Activated CD8-positive, alpha-beta T cell treated with anti-CD3 and anti-CD28 coated beads for 36 hours (primary cell): ENCODE measurements at regions of chr6 and their contacts with region 1.

Region 1: GRCh38 chr6:149423964-149424440 is 23.9 kb downstream of the SUMO4 start:
- DNase-seq: no peak
- ATAC-seq: no peak
- H3K4me3 Mint-ChIP-seq: no peak overlapping the region
- H3K27ac Mint-ChIP-seq: no peak overlapping the region
- H3K4me1 Mint-ChIP-seq: peaks cover 8% of the 10 kb centered on the region
- H3K27me3 Mint-ChIP-seq: no peaks in the 10 kb centered on the region
- CTCF ChIP-seq: no peak

Region 2: DNA sequence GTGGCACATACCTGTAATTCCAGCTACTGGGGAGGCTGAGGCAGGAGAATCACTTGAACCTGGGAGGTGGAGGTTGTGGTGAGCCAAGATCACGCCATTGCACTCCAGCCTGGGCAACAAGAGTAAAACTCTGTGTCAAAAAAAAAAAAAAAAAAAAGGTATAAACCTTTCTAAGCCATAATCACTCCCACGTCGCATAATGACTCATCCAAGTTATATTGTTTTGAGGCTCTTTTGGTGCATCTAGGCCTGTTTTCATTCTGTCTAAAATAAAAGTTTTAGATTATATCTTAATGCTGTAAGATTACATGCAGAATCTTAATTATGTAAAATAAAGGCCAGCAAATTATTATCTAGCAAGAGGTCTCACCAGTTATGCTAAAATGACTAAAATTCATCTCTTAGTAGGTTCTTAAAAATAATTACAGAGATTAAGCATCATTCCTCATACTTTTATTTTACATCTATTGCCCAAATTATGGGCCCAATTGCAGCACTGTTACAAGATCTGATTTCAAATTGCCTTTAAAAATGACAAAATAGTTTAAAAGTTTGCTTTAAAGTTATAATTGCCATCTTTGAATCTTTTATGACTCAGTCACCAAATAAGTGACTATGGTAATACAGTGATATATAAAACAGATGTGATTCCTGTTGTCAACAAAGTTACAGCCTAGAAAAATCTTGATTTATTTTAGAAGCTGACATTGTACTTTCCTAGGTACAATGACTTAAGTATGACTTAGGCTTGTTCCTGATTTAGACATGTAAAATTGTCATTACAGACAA is 34.3 kb before region 1 on chr6:
- CTCF ChIA-PET with region 1: no interaction called
- POLR2A ChIA-PET with region 1: no interaction called
- intact Hi-C with region 1: no loop called
- DNase-seq: no peak
- ATAC-seq: no peak
- H3K4me3 Mint-ChIP-seq: no peak overlapping the region
- H3K27ac Mint-ChIP-seq: no peak overlapping the region
- H3K4me1 Mint-ChIP-seq: peaks cover 69% of the 10 kb centered on the region
- H3K27me3 Mint-ChIP-seq: no peaks in the 10 kb centered on the region
- CTCF ChIP-seq: no peak

Region 3: GRCh38 chr6:149410557-149410956 is 13.4 kb before region 1 on chr6:
- CTCF ChIA-PET with region 1: interaction called, 11 read pairs
- POLR2A ChIA-PET with region 1: interaction called, 4 read pairs
- intact Hi-C with region 1: no loop called
- DNase-seq: no peak
- ATAC-seq: no peak
- H3K4me3 Mint-ChIP-seq: no peak overlapping the region
- H3K27ac Mint-ChIP-seq: peak overlapping the region; percentile 53
- H3K4me1 Mint-ChIP-seq: peaks cover 20% of the 10 kb centered on the region
- H3K27me3 Mint-ChIP-seq: no peaks in the 10 kb centered on the region
- CTCF ChIP-seq: no peak

Region 4: GRCh38 chr6:150435832-150436231 is 1011.8 kb after region 1 on chr6:
- CTCF ChIA-PET with region 1: no interaction called
- POLR2A ChIA-PET with region 1: no interaction called
- intact Hi-C with region 1: no loop called
- DNase-seq: no peak
- ATAC-seq: no peak
- H3K4me3 Mint-ChIP-seq: no peak overlapping the region
- H3K27ac Mint-ChIP-seq: no peak overlapping the region
- H3K4me1 Mint-ChIP-seq: no peaks in the 10 kb centered on the region
- H3K27me3 Mint-ChIP-seq: peaks cover 3% of the 10 kb centered on the region
- CTCF ChIP-seq: no peak